ENCODE measurements at regions of chr1 and their contacts with region 1.

Region 1: GRCh38 chr1:186375088-186375953 is at the starts of genes ODR4 and TPR:
- DNase-seq: peak; percentile 99
- H3K4me3 ChIP-seq: peak within 1 kb of the TSS; percentile 86
- H3K27ac ChIP-seq: peak within 1 kb of the TSS; percentile 99
- H3K27me3 ChIP-seq: no peaks in the 10 kb centered on the region
- CTCF ChIP-seq: peak; percentile 89
- polyA plus RNA-seq, gene ODR4: 9.7 and 16.8 TPM in 2 replicates
- polyA plus RNA-seq, gene TPR: 47.6 and 48.5 TPM in 2 replicates

Region 2: DNA sequence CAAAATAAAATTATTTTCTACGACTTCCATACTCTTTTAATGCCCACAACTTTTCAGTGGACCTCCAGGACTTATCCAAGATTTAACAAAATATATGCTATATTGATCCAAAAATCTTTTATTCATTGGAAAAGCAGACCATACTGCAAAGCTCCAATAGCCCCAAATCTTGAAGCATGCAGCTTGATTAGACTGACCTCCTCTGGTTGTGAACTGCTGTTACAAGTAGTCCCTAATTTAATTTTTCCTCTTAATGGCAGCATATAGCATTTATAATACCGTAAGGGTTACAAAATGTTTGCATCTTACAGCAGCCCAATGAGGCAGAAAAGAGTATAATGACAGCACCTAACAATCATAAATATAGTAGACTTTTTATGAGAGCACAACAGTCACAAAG is 50.1 kb before region 1 on chr1:
- CTCF ChIA-PET with region 1: interaction called, 23 read pairs
- POLR2A ChIA-PET with region 1: no interaction called
- DNase-seq: no peak
- H3K4me3 ChIP-seq: no peak overlapping the region
- H3K27ac ChIP-seq: no peak overlapping the region
- H3K27me3 ChIP-seq: no peaks in the 10 kb centered on the region
- CTCF ChIP-seq: peak; percentile 57

Region 3: GRCh38 chr1:186363891-186364290 is 11.4 kb before region 1 on chr1:
- CTCF ChIA-PET with region 1: interaction called, 68 read pairs
- POLR2A ChIA-PET with region 1: interaction called, 3 read pairs
- DNase-seq: no peak
- H3K4me3 ChIP-seq: no peak overlapping the region
- H3K27ac ChIP-seq: no peak overlapping the region
- H3K27me3 ChIP-seq: no peaks in the 10 kb centered on the region
- CTCF ChIP-seq: no peak

Region 4: GRCh38 chr1:186393476-186393875 is 18.2 kb after region 1 on chr1:
- CTCF ChIA-PET with region 1: interaction called, 57 read pairs
- POLR2A ChIA-PET with region 1: interaction called, 3 read pairs
- DNase-seq: no peak
- H3K4me3 ChIP-seq: no peak overlapping the region
- H3K27ac ChIP-seq: no peak overlapping the region
- H3K27me3 ChIP-seq: no peaks in the 10 kb centered on the region
- CTCF ChIP-seq: no peak

Region 5: GRCh38 chr1:186420923-186421322 is 45.6 kb after region 1 on chr1:
- CTCF ChIA-PET with region 1: interaction called, 12 read pairs
- POLR2A ChIA-PET with region 1: no interaction called
- DNase-seq: no peak
- H3K4me3 ChIP-seq: no peak overlapping the region
- H3K27ac ChIP-seq: no peak overlapping the region
- H3K27me3 ChIP-seq: no peaks in the 10 kb centered on the region
- CTCF ChIP-seq: no peak

Region 6: GRCh38 chr1:186700712-186701111 is 325.4 kb after region 1 on chr1:
- CTCF ChIA-PET with region 1: interaction called, 11 read pairs
- POLR2A ChIA-PET with region 1: no interaction called
- DNase-seq: no peak
- H3K4me3 ChIP-seq: no peak overlapping the region
- H3K27ac ChIP-seq: no peak overlapping the region
- H3K27me3 ChIP-seq: no peaks in the 10 kb centered on the region
- CTCF ChIP-seq: no peak

Region 7: DNA sequence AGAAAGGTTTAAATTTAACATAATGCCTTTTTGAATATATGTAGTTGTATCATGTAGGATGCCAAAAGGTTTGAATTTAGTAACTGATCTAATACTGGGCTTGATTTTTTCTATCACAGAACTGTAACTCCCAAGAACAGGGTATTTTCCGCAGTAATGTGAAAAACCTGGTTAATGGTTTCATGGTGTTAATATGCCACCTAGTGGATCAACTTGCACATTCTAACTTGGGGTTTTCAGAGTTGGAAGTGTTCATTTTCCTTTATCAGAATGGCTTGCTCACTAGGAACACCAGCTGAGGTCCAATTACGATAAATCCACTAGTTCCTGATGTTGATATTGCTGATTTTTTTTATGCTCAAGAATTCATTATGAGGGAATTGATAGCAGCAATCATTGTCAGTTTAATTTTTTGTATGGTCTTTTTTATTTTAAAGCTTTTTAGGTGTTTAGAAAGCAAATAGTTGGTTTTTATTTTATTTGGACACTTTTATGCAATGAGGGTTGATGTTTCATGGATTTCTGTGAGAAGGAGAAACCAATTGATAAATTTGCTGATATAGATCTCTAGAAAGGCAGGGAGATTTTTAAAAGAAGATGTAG is 610.7 kb after region 1 on chr1:
- CTCF ChIA-PET with region 1: interaction called, 24 read pairs
- POLR2A ChIA-PET with region 1: no interaction called
- DNase-seq: peak; percentile 29
- H3K4me3 ChIP-seq: no peak overlapping the region
- H3K27ac ChIP-seq: no peak overlapping the region
- H3K27me3 ChIP-seq: no peaks in the 10 kb centered on the region
- CTCF ChIP-seq: peak; percentile 76

Measured in AG04450 (cell line).